ENCODE measurements at regions of chr2 and their contacts with region 1.

Region 1: DNA sequence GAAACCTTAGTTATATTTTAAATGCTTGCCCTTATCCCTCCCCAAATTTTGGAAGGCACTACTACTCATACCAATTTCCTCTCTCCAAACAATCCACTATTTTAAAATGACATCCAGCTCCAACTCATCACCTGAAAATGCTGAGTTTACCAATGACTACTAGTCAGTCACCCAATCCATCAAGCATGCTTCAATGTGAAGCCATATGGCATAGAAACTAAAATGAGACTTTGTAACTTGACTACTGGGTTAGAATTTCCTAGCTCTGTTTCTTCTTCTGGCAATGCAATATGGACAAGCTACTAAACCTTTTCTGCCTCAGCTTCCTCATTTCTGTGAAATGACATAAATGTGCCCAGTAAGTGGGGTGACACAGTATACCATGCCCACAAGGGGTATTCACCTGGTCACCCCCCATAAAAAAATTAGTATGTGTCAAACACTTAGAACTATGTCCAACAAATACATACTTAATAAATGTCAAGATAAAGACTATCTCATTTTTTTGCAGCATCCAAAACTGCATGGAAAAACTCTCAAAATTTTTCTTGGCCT is 10.0 kb upstream of the STPG4 start:
- DNase-seq: peak in 1 of 2 experiments; percentile 32
- H3K4me3 ChIP-seq: no peak overlapping the region
- H3K27ac ChIP-seq: no peak overlapping the region
- H3K4me1 ChIP-seq: peaks cover 42% of the 10 kb centered on the region
- H3K27me3 ChIP-seq: no peaks in the 10 kb centered on the region
- CTCF ChIP-seq: no peak

Region 2: GRCh38 chr2:46909771-46910419 is 255.2 kb before region 1 on chr2:
- CTCF ChIA-PET with region 1: no interaction called
- POLR2A ChIA-PET with region 1: interaction called, 32 read pairs
- intact Hi-C with region 1: no loop called
- DNase-seq: peak; percentile 85 to 96
- H3K4me3 ChIP-seq: no peak overlapping the region
- H3K27ac ChIP-seq: peak overlapping the region; percentile 73
- H3K4me1 ChIP-seq: peaks cover 62% of the 10 kb centered on the region
- H3K27me3 ChIP-seq: no peaks in the 10 kb centered on the region
- CTCF ChIP-seq: no peak

Region 3: GRCh38 chr2:47127862-47128543 is 37.1 kb before region 1 on chr2:
- CTCF ChIA-PET with region 1: no interaction called
- POLR2A ChIA-PET with region 1: no interaction called
- intact Hi-C with region 1: no loop called
- DNase-seq: no peak
- H3K4me3 ChIP-seq: no peak overlapping the region
- H3K27ac ChIP-seq: no peak overlapping the region
- H3K4me1 ChIP-seq: peaks cover 9% of the 10 kb centered on the region
- H3K27me3 ChIP-seq: no peaks in the 10 kb centered on the region
- CTCF ChIP-seq: no peak

Region 4: GRCh38 chr2:47201224-47201623 is 36.1 kb after region 1 on chr2:
- CTCF ChIA-PET with region 1: no interaction called
- POLR2A ChIA-PET with region 1: no interaction called
- intact Hi-C with region 1: no loop called
- DNase-seq: peak in 1 of 2 experiments; percentile 89
- H3K4me3 ChIP-seq: no peak overlapping the region
- H3K27ac ChIP-seq: peak overlapping the region; percentile 54
- H3K4me1 ChIP-seq: peaks cover 66% of the 10 kb centered on the region
- H3K27me3 ChIP-seq: no peaks in the 10 kb centered on the region
- CTCF ChIP-seq: no peak

Region 5: GRCh38 chr2:47218066-47218581 is 53.0 kb after region 1 on chr2:
- CTCF ChIA-PET with region 1: no interaction called
- POLR2A ChIA-PET with region 1: no interaction called
- intact Hi-C with region 1: no loop called
- DNase-seq: peak; percentile 73 to 93
- H3K4me3 ChIP-seq: no peak overlapping the region
- H3K27ac ChIP-seq: peak overlapping the region; percentile 25; the same call in 1 of the 2 replicates
- H3K4me1 ChIP-seq: peaks cover 47% of the 10 kb centered on the region
- H3K27me3 ChIP-seq: no peaks in the 10 kb centered on the region
- CTCF ChIP-seq: no peak

Region 6: DNA sequence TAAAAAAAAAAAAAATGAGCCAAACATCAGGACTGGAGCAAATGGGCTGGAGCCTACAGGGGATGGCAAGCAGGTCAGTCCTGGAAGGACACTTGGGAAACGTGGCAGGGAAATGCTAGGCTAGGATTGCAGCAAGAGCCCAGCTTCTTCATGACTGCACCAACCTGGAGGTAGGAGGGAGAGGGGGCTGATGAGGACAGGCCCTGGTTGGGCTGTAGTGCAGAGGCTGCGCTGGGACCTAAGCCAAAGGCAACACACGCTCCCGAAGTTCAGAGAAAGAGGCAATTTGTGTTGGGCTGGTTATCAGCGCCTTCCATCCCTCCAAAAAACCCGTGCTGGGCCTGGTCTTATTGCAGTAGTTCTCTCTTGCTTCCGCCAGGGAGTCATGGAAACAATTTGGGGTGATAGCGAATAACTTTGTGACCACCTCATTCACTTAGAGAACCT is 72.3 kb after region 1 on chr2:
- CTCF ChIA-PET with region 1: no interaction called
- POLR2A ChIA-PET with region 1: interaction called, 10 read pairs
- intact Hi-C with region 1: no loop called
- DNase-seq: no peak
- H3K4me3 ChIP-seq: no peak overlapping the region
- H3K27ac ChIP-seq: no peak overlapping the region
- H3K4me1 ChIP-seq: peaks cover 22% of the 10 kb centered on the region
- H3K27me3 ChIP-seq: no peaks in the 10 kb centered on the region
- CTCF ChIP-seq: no peak

Region 7: DNA sequence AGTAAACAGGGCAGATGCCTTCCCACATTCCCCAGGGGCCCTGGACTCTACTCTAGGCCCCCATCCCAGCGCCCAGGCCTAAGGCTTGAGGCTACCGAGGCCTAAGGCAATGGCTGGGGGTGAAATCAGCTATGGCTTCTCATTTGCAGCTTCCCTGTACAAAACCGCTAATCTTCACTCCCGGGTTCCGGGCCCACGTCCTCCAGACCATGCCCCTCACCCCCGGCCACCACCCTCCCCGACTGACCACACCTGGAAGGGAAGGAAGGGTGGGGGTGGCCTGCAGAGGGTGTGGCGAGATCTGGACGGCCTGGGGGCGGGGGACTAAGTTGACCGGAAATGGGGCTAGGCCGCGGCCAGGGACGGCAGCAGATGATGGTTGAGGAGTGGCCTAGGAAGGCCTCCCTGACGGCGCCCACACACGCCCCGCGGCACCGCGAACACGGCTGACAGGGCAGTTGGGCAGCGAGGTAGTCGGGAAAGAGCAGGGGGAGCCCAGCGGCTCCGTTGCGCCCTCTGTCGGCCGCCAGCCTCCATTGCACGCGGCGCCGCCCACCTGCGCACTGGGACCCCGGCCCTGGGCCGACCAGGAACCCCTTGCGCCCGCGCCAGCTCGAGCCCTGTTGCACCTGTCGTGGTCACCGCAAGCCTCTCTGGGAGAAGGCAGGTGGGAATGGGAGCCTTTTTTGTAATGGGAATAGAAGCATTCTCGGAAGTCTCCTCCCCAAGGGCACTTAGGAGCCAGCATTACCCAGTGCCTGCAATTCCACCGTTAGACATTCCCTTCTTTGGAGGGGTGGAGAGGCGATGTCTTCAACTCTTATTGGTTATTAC is 107.2 kb after region 1 on chr2:
- CTCF ChIA-PET with region 1: no interaction called
- POLR2A ChIA-PET with region 1: no interaction called
- intact Hi-C with region 1: no loop called
- DNase-seq: peak; percentile 79 to 92
- H3K4me3 ChIP-seq: peak overlapping the region; percentile 56; the same call in 1 of the 2 replicates
- H3K27ac ChIP-seq: peak overlapping the region; percentile 99
- H3K4me1 ChIP-seq: peaks cover 62% of the 10 kb centered on the region
- H3K27me3 ChIP-seq: no peaks in the 10 kb centered on the region
- CTCF ChIP-seq: peak; percentile 100